Testis (tissue), 5 donors: ENCODE measurements at regions of chr2 and their contacts with region 1.

Region 1: DNA sequence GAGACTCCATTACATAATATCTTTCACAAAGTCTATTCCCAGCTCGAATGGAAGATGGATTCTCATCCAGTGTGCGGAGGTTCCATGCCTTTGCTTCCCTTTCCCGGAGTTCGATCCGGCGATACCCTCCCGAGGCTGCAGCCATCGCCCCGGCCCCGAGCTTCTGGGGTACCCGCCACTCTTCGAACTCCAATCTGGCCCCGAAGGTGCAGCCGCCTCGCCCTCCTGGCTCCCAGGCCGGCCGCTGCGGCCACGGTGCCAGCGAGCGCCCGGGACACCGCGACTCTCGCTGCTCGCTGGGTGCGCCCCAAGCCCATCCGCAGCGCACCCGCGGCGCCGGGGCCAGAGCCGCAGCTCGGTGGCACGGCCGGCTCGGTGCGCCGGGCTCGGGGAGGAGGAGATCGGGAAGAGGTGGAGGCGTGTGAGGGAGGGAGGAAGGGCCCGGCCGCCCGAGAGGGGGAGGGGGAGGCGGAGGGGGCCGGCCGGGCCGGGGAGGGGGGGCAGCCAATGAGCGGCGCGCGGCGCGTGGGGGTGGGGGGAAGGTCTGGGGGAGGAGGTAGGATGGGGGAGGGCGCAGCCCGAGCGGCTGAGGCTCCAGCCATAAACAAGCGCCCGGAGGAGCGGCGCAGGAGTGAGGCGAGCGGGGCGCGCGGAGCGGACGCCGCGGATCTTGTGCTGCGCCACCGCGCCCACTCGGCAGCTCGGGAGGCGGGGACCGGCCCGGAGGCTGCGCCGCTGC is at the start of gene CRIM1:
- DNase-seq: peak; percentile 90
- H3K4me3 ChIP-seq: peak within 1 kb of the TSS; percentile 63 to 88
- H3K27ac ChIP-seq: peak within 1 kb of the TSS; percentile 73 to 88
- H3K4me1 ChIP-seq: peaks cover 19% of the 10 kb centered on the region
- H3K27me3 ChIP-seq: no peaks in the 10 kb centered on the region
- CTCF ChIP-seq: no peak
- POLR2A ChIP-seq: peak; percentile 6
- total RNA-seq, gene CRIM1: 68.4 to 94.1 TPM

Region 2: GRCh38 chr2:36415381-36416022 is 60.2 kb after region 1 on chr2:
- intact Hi-C with region 1: loop called (anchors 2 kb)
- DNase-seq: no peak
- H3K4me3 ChIP-seq: no peak overlapping the region
- H3K27ac ChIP-seq: no peak overlapping the region
- H3K4me1 ChIP-seq: peaks cover 9% of the 10 kb centered on the region
- H3K27me3 ChIP-seq: no peaks in the 10 kb centered on the region
- CTCF ChIP-seq: no peak
- POLR2A ChIP-seq: no peak

Region 3: DNA sequence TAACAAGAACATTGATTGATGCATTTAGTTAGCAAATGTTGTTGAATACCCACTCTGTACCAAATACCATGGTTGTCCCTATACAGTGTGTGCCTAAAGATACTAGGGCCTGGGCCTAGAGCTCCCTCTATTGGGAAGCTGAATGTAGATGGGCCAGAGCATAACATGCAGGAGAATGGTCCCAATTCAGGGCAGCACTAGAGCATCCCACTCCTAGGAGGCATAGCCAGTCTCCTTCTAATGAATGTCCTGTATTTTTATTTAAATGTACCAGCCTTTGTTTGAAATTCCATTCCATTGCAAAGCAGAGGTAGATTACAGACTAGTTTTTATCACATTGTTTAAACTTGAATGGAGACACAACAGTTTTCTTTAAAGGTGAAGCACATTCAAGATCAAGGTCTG is 152.1 kb after region 1 on chr2:
- intact Hi-C with region 1: loop called (anchors 10 kb)
- DNase-seq: peak; percentile 69
- H3K4me3 ChIP-seq: no peak overlapping the region
- H3K27ac ChIP-seq: no peak overlapping the region
- H3K4me1 ChIP-seq: no peaks in the 10 kb centered on the region
- H3K27me3 ChIP-seq: no peaks in the 10 kb centered on the region
- CTCF ChIP-seq: peak in 2 of 3 experiments; percentile 39 to 49
- POLR2A ChIP-seq: no peak